Mammary epithelial cell (primary cell): ENCODE measurements at regions of chr22 and their contacts with region 1.

Region 1: DNA sequence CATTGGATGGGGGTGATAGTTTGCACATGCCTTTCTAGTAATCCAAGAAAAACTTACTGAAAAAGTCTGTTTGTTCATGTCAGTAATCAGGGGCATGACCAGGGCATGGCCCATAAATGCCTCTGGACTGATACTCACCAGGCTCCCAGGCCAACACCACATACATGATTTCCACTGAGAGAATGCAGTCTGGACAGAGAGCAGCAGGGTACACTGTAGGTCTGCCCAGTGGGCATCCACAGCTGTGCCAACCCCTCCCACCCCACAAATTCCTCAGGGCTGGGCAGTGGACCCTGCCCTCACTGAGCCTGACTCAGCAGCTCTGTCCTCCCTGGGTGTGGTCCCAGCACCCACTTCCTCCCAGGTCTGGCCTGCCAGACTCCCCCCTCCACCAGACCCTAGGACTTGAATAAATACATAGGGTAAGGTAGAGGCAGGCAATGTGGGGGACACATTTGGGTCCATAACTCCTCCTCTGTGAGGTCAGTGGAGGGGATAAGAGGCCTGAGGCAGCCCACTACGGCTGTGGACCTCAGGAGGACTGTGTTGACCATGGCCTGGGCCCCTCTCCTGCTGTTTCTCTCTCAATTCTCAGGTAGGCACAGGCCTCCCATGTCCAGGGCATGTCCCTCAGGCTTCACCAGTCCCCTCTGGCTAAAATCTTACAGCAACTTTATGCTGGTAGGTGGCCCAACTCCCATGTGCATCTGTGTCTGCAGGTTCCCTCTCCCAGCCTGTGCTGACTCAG is 92.2 kb upstream of the TOP3B start:
- DNase-seq: peak; percentile 48
- H3K4me3 ChIP-seq: no peak overlapping the region
- H3K27ac ChIP-seq: peak overlapping the region; percentile 63
- H3K4me1 ChIP-seq: peaks cover 43% of the 10 kb centered on the region
- H3K27me3 ChIP-seq: no peaks in the 10 kb centered on the region
- CTCF ChIP-seq: peak in 1 of 2 donors; percentile 40

Region 2: DNA sequence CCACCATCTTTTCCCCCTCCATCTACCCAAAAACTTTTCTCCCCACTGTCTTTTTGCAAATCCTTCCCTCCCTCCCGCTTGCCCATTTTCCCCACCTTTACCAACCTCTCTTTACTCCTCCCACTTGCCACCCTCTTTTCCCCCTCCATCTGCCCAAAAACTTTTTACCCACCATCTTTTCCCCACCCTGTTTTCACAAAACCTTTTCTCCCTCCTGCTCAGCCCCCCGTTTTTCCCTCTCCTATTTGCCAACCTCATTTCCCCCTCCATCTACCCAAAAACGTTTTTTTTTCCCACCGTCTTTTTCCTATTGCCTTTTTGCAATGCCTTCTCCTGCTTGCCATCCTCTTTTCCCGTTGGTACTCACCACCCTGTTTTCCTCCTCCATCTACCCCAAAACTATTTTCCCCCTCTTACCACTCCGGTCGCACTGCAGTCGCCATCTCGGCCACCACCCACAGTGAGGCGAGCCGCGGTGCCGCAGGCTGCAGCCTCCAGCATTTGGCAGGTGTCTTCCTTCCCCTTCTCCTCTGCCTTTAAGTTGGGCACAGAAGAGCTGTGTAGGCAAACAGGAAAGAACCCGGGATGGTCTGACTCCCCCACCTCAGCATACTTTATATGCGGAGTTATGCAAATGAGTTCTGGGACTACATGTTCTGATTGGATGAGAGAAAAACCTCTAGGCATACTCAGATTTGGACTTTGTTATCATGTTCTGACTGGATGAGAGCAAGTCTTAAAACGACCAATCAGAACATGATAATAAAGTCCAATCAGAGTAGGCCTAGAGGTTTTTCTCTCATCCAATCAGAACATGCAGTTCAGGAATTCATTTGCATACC is 48.5 kb after region 1 on chr22:
- CTCF ChIA-PET with region 1: no interaction called
- dilution Hi-C with region 1: no loop called
- in situ Hi-C with region 1: no loop called
- intact Hi-C with region 1: no loop called
- DNase-seq: no peak
- H3K4me3 ChIP-seq: no peak overlapping the region
- H3K27ac ChIP-seq: no peak overlapping the region
- H3K4me1 ChIP-seq: no peaks in the 10 kb centered on the region
- H3K27me3 ChIP-seq: no peaks in the 10 kb centered on the region
- CTCF ChIP-seq: no peak

Region 3: GRCh38 chr22:22156716-22157347 is 82.0 kb after region 1 on chr22:
- CTCF ChIA-PET with region 1: no interaction called
- dilution Hi-C with region 1: no loop called
- in situ Hi-C with region 1: loop called in 1 of 2 experiments (anchors 5 kb)
- intact Hi-C with region 1: no loop called
- DNase-seq: peak; percentile 43
- H3K4me3 ChIP-seq: no peak overlapping the region
- H3K27ac ChIP-seq: no peak overlapping the region
- H3K4me1 ChIP-seq: no peaks in the 10 kb centered on the region
- H3K27me3 ChIP-seq: no peaks in the 10 kb centered on the region
- CTCF ChIP-seq: peak; percentile 71 to 86

Region 4: DNA sequence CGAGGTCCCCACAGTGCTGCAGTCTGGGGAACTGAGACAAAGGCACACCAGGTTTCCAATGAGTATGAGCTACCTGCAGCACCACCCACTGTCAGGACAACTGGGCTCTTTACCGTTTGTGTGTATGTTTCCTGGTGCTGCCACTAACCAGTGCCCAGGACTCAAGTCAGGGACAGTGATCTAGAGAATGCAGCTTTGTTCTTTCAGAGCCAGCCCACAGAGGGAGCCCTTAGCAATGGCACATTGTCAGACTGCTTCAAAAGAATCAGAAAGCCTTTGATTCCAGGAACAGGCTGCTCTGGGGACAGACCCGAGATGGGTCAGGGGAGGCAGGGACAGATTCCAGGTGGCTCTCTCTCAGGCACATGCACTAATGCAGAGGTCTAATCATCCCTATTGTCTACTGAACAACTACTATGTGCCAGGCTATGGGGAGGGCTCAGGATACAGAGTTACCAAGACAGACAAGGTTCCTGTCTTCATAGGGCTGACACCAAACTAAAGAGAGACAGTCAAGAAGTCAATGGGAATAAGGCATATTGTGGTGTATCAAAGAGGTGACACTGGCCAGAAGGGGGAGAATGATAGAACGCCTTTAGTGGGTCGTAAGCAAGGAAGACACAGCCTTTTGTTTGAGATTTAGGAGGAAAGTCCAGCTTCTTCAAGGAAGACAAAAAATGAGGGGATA is 273.5 kb after region 1 on chr22:
- CTCF ChIA-PET with region 1: no interaction called
- dilution Hi-C with region 1: no loop called
- in situ Hi-C with region 1: no loop called
- intact Hi-C with region 1: no loop called
- DNase-seq: no peak
- H3K4me3 ChIP-seq: no peak overlapping the region
- H3K27ac ChIP-seq: no peak overlapping the region
- H3K4me1 ChIP-seq: no peaks in the 10 kb centered on the region
- H3K27me3 ChIP-seq: no peaks in the 10 kb centered on the region
- CTCF ChIP-seq: peak in 1 of 2 donors; percentile 34